Activated CD4-positive, alpha-beta memory T cell treated with anti-CD3 and anti-CD28 coated beads, Interleukin-2, amount 10 ng/mL, durations not matched to agents 7 days and 5 days (primary cell): ENCODE measurements at regions of chr14 and their contacts with region 1.

Region 1: DNA sequence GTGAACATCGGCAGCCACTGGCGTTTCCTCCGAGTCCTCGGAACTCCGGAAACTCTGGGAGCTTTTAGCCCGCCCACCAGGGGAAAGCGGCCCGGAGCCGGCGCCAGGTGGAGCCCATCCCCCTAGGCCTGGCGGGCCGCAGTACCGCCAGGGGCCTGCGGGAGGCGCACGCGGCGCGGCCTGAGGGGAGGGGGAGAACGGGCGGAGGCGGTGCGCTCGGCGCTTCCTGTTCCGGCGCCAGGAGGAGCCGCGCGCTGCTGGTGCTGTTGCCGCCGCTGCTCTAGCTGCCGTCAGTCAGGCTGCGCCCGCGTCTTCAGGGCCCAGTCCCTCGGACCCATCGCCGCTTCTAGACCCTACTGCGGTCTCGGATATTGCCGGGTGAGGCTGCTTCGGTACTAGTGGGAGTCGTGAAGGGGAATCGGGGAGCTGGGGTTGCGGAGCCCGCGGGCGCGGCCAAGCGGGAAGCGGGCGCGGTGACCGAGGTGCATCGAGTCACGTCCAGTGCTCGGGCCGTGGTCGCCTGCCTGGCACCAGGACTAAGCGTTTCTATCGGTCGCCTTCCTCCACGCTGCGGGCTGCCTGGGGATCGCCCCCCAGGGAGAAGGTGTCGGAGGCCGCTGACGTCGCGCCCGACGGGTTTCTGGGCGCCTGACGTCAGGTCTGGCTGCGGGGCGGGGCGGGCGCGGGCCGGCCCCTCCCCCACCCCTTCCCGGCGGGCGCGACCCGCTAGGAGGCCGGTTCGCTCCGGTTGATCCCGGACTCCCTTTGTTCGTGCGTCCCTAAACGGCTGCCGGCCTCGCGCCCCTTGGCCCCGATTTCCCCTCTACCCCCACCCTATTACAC is at the start of gene MAPK1IP1L:
- DNase-seq: peak; percentile 92
- H3K4me3 Mint-ChIP-seq: peak within 1 kb of the TSS; percentile 88
- H3K27ac Mint-ChIP-seq: peak within 1 kb of the TSS; percentile 94
- H3K4me1 Mint-ChIP-seq: peaks cover 38% of the 10 kb centered on the region
- H3K27me3 Mint-ChIP-seq: no peaks in the 10 kb centered on the region
- total RNA-seq, gene MAPK1IP1L: 100 to 104 TPM

Region 2: GRCh38 chr14:55026793-55027561 is 24.7 kb before region 1 on chr14 and contains the starts of genes SOCS4 and WDHD1:
- CTCF ChIA-PET with region 1: interaction called, 41 read pairs
- POLR2A ChIA-PET with region 1: interaction called, 153 read pairs
- DNase-seq: peak; percentile 97
- H3K4me3 Mint-ChIP-seq: peak within 1 kb of the TSS; percentile 88
- H3K27ac Mint-ChIP-seq: peak within 1 kb of the TSS; percentile 88
- H3K4me1 Mint-ChIP-seq: peaks cover 52% of the 10 kb centered on the region
- H3K27me3 Mint-ChIP-seq: no peaks in the 10 kb centered on the region
- total RNA-seq, gene SOCS4: 24.2 to 32.0 TPM
- total RNA-seq, gene WDHD1: 36.2 to 36.9 TPM

Region 3: DNA sequence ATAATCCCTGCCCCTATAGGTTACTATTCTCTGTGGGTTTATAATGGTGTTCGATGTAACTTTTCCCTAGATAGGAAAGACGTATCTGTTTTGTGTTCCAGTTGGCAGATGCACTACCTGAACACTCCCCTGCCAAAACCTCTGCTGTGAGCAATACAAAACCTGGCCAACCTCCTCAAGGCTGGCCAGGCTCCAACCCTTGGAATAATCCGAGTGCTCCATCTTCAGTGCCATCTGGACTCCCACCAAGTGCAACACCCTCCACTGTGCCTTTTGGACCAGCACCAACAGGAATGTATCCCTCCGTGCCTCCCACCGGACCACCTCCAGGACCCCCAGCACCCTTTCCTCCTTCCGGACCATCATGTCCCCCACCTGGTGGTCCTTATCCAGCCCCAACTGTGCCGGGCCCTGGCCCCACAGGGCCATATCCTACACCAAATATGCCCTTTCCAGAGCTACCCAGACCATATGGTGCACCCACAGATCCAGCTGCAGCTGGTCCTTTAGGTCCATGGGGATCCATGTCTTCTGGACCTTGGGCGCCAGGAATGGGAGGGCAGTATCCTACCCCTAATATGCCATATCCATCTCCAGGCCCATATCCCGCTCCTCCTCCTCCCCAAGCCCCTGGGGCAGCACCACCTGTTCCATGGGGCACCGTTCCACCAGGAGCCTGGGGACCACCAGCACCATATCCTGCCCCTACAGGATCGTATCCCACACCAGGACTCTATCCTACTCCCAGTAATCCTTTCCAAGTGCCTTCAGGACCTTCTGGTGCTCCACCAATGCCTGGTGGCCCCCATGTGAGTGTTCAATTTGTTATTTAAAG is 11.1 kb after region 1 on chr14:
- CTCF ChIA-PET with region 1: interaction called, 13 read pairs
- POLR2A ChIA-PET with region 1: interaction called, 27 read pairs
- DNase-seq: no peak
- H3K4me3 Mint-ChIP-seq: no peak overlapping the region
- H3K27ac Mint-ChIP-seq: no peak overlapping the region
- H3K4me1 Mint-ChIP-seq: peaks cover 15% of the 10 kb centered on the region
- H3K27me3 Mint-ChIP-seq: no peaks in the 10 kb centered on the region

Region 4: GRCh38 chr14:55077155-55077554 is 25.5 kb after region 1 on chr14:
- CTCF ChIA-PET with region 1: interaction called, 29 read pairs
- POLR2A ChIA-PET with region 1: interaction called, 29 read pairs
- DNase-seq: peak; percentile 27
- H3K4me3 Mint-ChIP-seq: no peak overlapping the region
- H3K27ac Mint-ChIP-seq: no peak overlapping the region
- H3K4me1 Mint-ChIP-seq: peaks cover 29% of the 10 kb centered on the region
- H3K27me3 Mint-ChIP-seq: no peaks in the 10 kb centered on the region

Region 5: DNA sequence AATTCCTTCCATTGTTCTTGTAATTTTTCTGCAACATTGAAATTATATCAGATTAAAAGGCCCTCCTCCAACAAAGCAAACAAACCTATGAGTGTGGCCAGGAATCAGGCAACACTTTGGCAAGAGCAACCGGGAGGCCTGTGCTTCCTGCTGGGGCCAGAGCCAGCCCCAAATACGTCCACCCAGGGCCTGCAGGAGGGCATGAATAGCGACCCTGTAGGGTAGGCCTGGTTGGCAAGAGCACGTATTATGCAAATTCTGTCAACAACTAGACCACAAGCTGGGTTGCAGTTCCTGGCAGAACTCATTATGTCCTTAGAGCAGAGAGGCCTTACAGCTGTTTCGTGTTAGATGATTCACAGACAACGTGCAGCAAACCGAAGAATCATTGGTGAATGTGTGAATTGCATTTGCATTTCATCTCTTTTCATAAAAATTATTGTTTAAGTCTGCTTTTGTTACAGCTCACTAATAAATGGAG is 50.5 kb after region 1 on chr14:
- CTCF ChIA-PET with region 1: interaction called, 12 read pairs
- POLR2A ChIA-PET with region 1: interaction called, 25 read pairs
- DNase-seq: peak; percentile 72
- H3K4me3 Mint-ChIP-seq: peak overlapping the region; percentile 61
- H3K27ac Mint-ChIP-seq: peak overlapping the region; percentile 99
- H3K4me1 Mint-ChIP-seq: peaks cover 71% of the 10 kb centered on the region
- H3K27me3 Mint-ChIP-seq: no peaks in the 10 kb centered on the region

Region 6: DNA sequence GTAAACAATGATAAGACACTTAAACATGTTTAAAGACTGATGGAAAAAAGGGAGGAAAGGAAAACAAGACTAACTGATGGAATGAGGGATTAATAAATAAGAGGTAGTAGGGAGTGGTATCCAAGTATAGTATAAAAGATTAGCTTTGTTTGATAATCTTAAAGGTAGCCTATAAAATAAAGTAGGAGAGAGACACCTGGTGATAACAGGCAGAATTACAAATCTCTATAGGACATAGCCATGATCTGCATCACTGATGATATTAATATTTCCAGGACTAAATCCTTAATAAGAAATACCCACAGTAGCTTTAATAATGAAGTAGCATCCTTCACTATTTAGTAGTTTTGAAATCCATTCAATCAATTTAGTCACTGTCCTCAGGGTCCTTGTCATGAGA is 109.3 kb after region 1 on chr14:
- CTCF ChIA-PET with region 1: interaction called, 31 read pairs
- POLR2A ChIA-PET with region 1: interaction called, 16 read pairs
- DNase-seq: no peak
- H3K4me3 Mint-ChIP-seq: no peak overlapping the region
- H3K27ac Mint-ChIP-seq: no peak overlapping the region
- H3K4me1 Mint-ChIP-seq: peaks cover 20% of the 10 kb centered on the region
- H3K27me3 Mint-ChIP-seq: no peaks in the 10 kb centered on the region